ENCODE measurements at regions of chr3 and their contacts with region 1.

Region 1: GRCh38 chr3:4722103-4722502 is 229.0 kb downstream of the ITPR1 start:
- DNase-seq: peak; percentile 53
- H3K4me3 Mint-ChIP-seq: no peak overlapping the region
- H3K27ac Mint-ChIP-seq: peak overlapping the region; percentile 30
- H3K4me1 Mint-ChIP-seq: peaks cover 6% of the 10 kb centered on the region
- H3K27me3 Mint-ChIP-seq: no peaks in the 10 kb centered on the region

Region 2: GRCh38 chr3:4680881-4681300 is 41.2 kb before region 1 on chr3:
- CTCF ChIA-PET with region 1: no interaction called
- intact Hi-C with region 1: no loop called
- DNase-seq: no peak
- H3K4me3 Mint-ChIP-seq: no peak overlapping the region
- H3K27ac Mint-ChIP-seq: no peak overlapping the region
- H3K4me1 Mint-ChIP-seq: no peaks in the 10 kb centered on the region
- H3K27me3 Mint-ChIP-seq: no peaks in the 10 kb centered on the region

Region 3: GRCh38 chr3:4826237-4827100 is 104.4 kb after region 1 on chr3:
- CTCF ChIA-PET with region 1: interaction called, 6 read pairs
- intact Hi-C with region 1: loop called (anchors 2 kb)
- DNase-seq: no peak
- H3K4me3 Mint-ChIP-seq: no peak overlapping the region
- H3K27ac Mint-ChIP-seq: peak overlapping the region; percentile 57
- H3K4me1 Mint-ChIP-seq: peaks cover 93% of the 10 kb centered on the region
- H3K27me3 Mint-ChIP-seq: no peaks in the 10 kb centered on the region

Region 4: GRCh38 chr3:4845882-4846281 is 123.8 kb after region 1 on chr3:
- CTCF ChIA-PET with region 1: interaction called, 3 read pairs
- intact Hi-C with region 1: loop called (anchors 1 kb)
- DNase-seq: no peak
- H3K4me3 Mint-ChIP-seq: no peak overlapping the region
- H3K27ac Mint-ChIP-seq: peak overlapping the region; percentile 93
- H3K4me1 Mint-ChIP-seq: peaks cover 94% of the 10 kb centered on the region
- H3K27me3 Mint-ChIP-seq: no peaks in the 10 kb centered on the region

Region 5: DNA sequence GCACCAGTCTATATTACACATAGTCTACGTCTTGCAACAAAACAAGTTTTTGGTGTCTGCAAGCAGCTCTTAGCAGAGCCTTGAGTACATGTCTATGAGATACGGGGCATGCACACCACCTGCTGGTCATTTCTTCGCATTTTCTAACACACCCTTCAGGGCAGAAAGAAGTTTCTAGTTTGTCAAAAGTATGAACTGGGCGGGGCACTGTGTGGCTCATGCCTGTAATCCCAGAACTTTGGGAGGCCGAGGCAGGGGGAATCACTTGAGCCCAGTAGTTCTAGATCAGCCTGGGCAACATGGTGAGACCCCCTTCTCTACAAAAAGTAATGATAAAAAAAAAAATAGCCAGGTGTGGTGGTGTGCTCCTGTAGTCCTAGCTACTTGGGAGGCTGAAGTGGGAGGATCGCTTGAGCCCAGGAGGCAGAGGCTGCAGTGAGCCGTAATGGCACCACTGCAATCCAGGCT is 335.8 kb after region 1 on chr3:
- CTCF ChIA-PET with region 1: interaction called, 8 read pairs
- intact Hi-C with region 1: loop called (anchors 1 kb)
- DNase-seq: peak; percentile 91
- H3K4me3 Mint-ChIP-seq: no peak overlapping the region
- H3K27ac Mint-ChIP-seq: no peak overlapping the region
- H3K4me1 Mint-ChIP-seq: peaks cover 5% of the 10 kb centered on the region
- H3K27me3 Mint-ChIP-seq: no peaks in the 10 kb centered on the region